Panc1 (cell line): ENCODE measurements at regions of chr14 and their contacts with region 1.

Region 1: DNA sequence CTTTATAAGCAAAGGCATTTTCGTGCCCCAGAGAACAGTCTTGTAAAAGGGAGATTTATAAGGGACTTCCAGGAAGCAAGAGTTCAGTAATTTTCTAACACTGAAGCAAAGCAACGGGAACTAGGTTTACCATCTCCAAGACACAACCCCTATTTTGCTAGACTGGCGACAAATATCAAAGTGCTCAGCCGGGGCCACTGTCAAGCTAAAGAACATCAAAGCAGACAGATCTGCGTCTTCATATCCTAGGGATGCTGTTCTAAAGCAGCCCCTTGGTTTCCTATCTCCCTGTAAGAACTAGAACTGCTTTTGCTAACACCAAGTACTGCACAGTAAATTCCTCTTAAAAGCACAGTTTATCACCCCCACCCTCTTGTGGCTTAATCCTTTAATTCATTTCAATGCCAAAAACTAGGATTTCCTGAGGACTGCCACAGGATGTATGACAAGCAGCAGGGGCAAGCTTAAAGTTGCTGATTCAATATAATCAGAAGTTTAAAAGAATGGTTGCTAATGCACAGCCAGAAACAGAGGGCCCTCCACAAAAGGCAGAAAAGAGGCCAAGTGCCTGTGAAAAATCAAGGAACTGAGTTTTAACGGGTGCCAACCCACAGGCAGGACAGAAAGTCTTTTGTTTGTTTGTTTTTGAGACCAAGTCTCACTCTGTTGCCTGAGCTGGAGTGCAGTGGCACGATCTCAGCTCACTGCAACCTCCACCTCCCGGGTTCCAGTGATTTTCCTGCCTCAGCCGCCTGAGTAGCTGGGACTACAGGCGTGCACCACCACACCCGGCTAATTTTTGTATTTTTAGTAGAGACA is 44.0 kb upstream of the ISM2 start:
- DNase-seq: no peak
- ATAC-seq: no peak
- H3K4me3 ChIP-seq: no peak overlapping the region
- H3K27ac ChIP-seq: no peak overlapping the region
- H3K4me1 ChIP-seq: no peaks in the 10 kb centered on the region
- H3K27me3 ChIP-seq: no peaks in the 10 kb centered on the region
- CTCF ChIP-seq: no peak

Region 2: DNA sequence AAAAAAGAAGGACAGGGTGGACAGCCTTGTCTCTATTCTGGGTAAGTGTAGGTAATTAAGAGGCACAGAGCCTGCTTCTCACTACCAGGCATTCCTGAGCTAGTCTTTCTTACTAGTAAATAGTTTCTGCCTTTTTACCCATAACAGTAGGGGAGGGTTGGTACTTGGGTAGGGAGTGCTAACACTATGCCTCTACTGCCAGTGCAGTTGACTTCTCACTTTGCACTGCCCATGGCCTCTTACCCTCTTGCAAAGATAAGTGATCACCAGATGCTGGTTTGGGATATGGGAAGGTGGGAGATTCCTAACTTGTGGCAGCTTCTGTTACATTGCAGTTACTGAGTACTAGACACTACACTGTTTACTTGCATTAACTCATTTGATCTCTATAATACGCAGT is 73.1 kb before region 1 on chr14:
- CTCF ChIA-PET with region 1: no interaction called
- POLR2A ChIA-PET with region 1: no interaction called
- in situ Hi-C with region 1: no loop called
- intact Hi-C with region 1: loop called (anchors 10 kb)
- DNase-seq: no peak
- ATAC-seq: 0 out of 2 replicates have a peak, but pooled peaks have one; percentile 23
- H3K4me3 ChIP-seq: no peak overlapping the region
- H3K27ac ChIP-seq: no peak overlapping the region
- H3K4me1 ChIP-seq: peaks cover 9% of the 10 kb centered on the region
- H3K27me3 ChIP-seq: no peaks in the 10 kb centered on the region
- CTCF ChIP-seq: no peak